Heart left ventricle (tissue), 16 donors: ENCODE measurements at regions of chr14 and their contacts with region 1.

Region 1: GRCh38 chr14:53953002-53953827 is 3.4 kb downstream of the BMP4 start:
- DNase-seq: peak; percentile 85 to 92 (median 90)
- ATAC-seq: peak; percentile 52 to 93 (median 86)
- H3K4me3 ChIP-seq: peak overlapping the region; percentile 57 to 93 (median 74)
- H3K27ac ChIP-seq: peak overlapping the region; percentile 82 to 97 (median 88)
- H3K4me1 ChIP-seq: peaks cover 0 to 54% (median 10%) of the 10 kb centered on the region in 12 donors
- H3K27me3 ChIP-seq: peaks cover 0 to 44% (median 7%) of the 10 kb centered on the region in 9 donors
- CTCF ChIP-seq: no peak
- POLR2A ChIP-seq: peak; percentile 9 to 89

Region 2: GRCh38 chr14:53539489-53540126 is 413.6 kb before region 1 on chr14:
- intact Hi-C with region 1: loop called in 4 of 10 experiments (anchors 2 to 10 kb)
- DNase-seq: peak; percentile 67 to 78 (median 72)
- ATAC-seq: peak; percentile 67 to 92 (median 81)
- H3K4me3 ChIP-seq: no peak overlapping the region
- H3K27ac ChIP-seq: peak overlapping the region in 5 of 12 donors; percentile 15 to 56 (median 34)
- H3K4me1 ChIP-seq: peaks cover 0 to 42% (median 7%) of the 10 kb centered on the region in 12 donors
- H3K27me3 ChIP-seq: no peaks in the 10 kb centered on the region
- CTCF ChIP-seq: peak; percentile 75 to 95 (median 89)
- POLR2A ChIP-seq: no peak

Region 3: GRCh38 chr14:53807542-53807941 is 145.7 kb before region 1 on chr14:
- intact Hi-C with region 1: loop called in 2 of 10 experiments (anchors 5 to 10 kb)
- DNase-seq: peak in 3 of 5 donors; percentile 27 to 57 (median 37)
- ATAC-seq: peak; percentile 73 to 87 (median 80)
- H3K4me3 ChIP-seq: no peak overlapping the region
- H3K27ac ChIP-seq: peak overlapping the region in 4 of 12 donors; percentile 26 to 75 (median 36)
- H3K4me1 ChIP-seq: peaks cover 0 to 12% (median 0%) of the 10 kb centered on the region in 12 donors
- H3K27me3 ChIP-seq: no peaks in the 10 kb centered on the region
- CTCF ChIP-seq: peak in 2 of 12 donors; percentile 9 to 35
- POLR2A ChIP-seq: no peak

Region 4: GRCh38 chr14:53875324-53875897 is 77.8 kb before region 1 on chr14:
- intact Hi-C with region 1: loop called in 2 of 10 experiments (anchors 5 kb)
- DNase-seq: no peak
- ATAC-seq: peak; percentile 18 to 48 (median 32)
- H3K4me3 ChIP-seq: no peak overlapping the region
- H3K27ac ChIP-seq: peak overlapping the region in 7 of 12 donors; percentile 27 to 64 (median 57)
- H3K4me1 ChIP-seq: peaks cover 0 to 46% (median 12%) of the 10 kb centered on the region in 12 donors
- H3K27me3 ChIP-seq: no peaks in the 10 kb centered on the region
- CTCF ChIP-seq: no peak
- POLR2A ChIP-seq: no peak

Region 5: GRCh38 chr14:53894456-53894855 is 58.8 kb before region 1 on chr14:
- intact Hi-C with region 1: loop called in 3 of 10 experiments (anchors 5 to 10 kb)
- DNase-seq: no peak
- ATAC-seq: no peak
- H3K4me3 ChIP-seq: no peak overlapping the region
- H3K27ac ChIP-seq: no peak overlapping the region
- H3K4me1 ChIP-seq: peaks cover 0 to 27% (median 7%) of the 10 kb centered on the region in 12 donors
- H3K27me3 ChIP-seq: no peaks in the 10 kb centered on the region
- CTCF ChIP-seq: no peak
- POLR2A ChIP-seq: no peak

Region 6: GRCh38 chr14:54338696-54339317 is 385.6 kb after region 1 on chr14:
- intact Hi-C with region 1: loop called in 3 of 10 experiments (anchors 10 kb)
- DNase-seq: no peak
- ATAC-seq: no peak
- H3K4me3 ChIP-seq: no peak overlapping the region
- H3K27ac ChIP-seq: no peak overlapping the region
- H3K4me1 ChIP-seq: peaks cover 0 to 9% (median 0%) of the 10 kb centered on the region in 12 donors
- H3K27me3 ChIP-seq: no peaks in the 10 kb centered on the region
- CTCF ChIP-seq: peak in 8 of 12 donors; percentile 13 to 45 (median 26)
- POLR2A ChIP-seq: no peak